ENCODE measurements at regions of chr7 and their contacts with region 1.

Region 1: DNA sequence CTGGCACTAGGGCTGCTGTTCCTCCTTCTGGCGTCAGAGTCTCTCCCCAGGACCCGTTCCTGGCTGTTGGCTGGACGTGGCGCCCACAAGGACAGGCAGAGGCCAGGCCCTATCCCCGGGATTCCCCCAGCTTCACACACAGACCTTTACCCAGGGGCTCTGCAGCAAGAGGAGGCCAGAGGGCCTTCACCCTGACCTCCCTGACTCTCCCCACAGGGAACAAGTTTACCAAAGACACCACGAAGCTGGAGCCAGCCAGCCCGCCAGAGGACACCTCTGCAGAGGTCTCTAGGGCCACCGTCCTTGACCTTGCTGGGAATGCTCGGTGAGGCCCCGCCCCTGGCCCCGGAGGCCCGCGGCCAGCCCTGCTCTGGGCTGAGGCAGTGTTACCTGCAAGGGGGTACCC is 82.2 kb downstream of the GTF2IRD1 start:
- DNase-seq: no peak
- ATAC-seq: peak; percentile 53

Region 2: GRCh38 chr7:74466196-74466813 is 69.6 kb before region 1 on chr7:
- intact Hi-C with region 1: loop called (anchors 1 kb)
- DNase-seq: no peak
- ATAC-seq: peak; percentile 81

Region 3: DNA sequence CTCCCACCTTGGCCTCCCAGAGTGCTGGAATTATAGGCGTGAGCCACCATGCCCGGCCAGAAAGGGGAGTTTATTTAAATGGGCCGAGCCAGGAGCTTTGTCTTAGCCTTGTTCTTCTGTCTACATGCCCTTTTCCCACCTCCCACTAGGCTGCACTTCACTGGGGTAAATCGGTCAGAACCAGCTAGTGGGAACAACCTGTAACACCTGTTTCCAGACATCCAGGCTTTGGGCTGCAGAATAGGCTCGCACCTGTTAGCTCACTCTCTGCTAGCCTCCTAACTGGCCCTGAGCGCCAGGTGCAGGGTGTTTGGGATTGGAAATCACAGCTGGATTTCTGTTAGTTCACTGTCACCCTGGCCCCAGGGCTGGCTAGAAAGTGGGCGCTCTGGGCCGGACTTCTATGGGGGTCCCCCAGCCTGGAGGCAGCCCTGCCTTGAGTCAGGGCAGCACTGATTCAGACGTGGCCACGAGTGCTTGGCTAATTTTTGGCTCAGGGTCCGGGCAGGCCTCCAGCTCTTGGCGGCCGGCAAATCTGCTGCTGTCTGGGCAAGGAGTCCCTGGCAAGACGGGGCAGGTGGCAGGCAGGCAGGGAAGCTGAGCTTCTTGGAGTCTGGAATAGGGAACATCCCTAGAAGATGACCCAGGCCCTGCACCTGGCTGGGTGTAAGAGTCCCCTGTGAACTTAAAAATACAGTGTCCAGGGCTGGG is 33.6 kb before region 1 on chr7:
- intact Hi-C with region 1: loop called (anchors 5 kb)
- DNase-seq: no peak
- ATAC-seq: peak; percentile 29

Region 4: DNA sequence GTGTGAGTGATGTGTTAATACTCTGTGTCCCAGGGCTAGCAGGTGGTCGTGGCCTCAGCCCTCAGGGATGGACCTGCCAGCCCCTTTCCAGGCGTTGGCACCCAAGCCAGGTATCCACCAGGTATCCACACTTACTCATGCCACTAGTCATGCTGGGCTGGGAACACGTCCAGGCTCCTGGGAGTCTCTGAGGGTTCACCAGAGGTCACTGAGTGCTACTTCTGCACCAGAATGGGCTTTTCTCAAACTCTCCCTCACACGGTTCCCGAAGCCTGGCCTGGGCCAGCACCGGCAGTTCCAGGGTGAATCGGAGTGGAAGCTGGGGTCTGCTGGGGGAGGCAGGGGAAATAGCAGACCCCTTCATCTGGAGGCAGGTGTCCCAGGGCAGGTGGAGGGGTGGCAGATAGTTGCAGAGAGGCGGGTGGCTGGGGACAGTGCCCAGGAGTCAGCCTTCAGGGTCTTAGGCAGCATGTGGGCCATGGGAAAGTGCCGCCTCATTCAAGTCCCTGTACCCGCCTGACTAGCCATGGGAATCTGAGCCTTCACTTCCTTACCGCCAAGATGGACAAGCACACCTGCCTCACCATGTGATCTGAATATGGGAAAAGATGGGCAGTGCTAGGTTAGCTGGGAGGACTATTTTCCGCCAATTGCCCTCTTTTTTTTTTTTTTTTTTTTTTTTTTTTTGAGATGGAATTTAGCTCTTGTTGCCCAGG is 26.1 kb after region 1 on chr7:
- intact Hi-C with region 1: no loop called
- DNase-seq: no peak
- ATAC-seq: no peak